ENCODE measurements at regions of chr18 and their contacts with region 1.

Region 1: GRCh38 chr18:9516437-9517064 is 41.2 kb downstream of the RALBP1 start:
- DNase-seq: peak in 1 of 2 experiments; percentile 32
- H3K4me3 ChIP-seq: no peak overlapping the region
- H3K4me3 Mint-ChIP-seq: no peak overlapping the region
- H3K27ac Mint-ChIP-seq: no peak overlapping the region
- H3K4me1 ChIP-seq: peaks cover 31% of the 10 kb centered on the region
- H3K4me1 Mint-ChIP-seq: peaks cover 15% of the 10 kb centered on the region
- H3K27me3 ChIP-seq: no peaks in the 10 kb centered on the region
- H3K27me3 Mint-ChIP-seq: no peaks in the 10 kb centered on the region
- CTCF ChIP-seq: peak; percentile 82 to 85

Region 2: GRCh38 chr18:9136315-9137155 is 380.0 kb before region 1 on chr18 and contains the start of gene ANKRD12:
- CTCF ChIA-PET with region 1: no interaction called
- POLR2A ChIA-PET with region 1: no interaction called
- intact Hi-C with region 1: loop called (anchors 10 kb)
- DNase-seq: peak; percentile 97 to 98
- H3K4me3 ChIP-seq: peak within 1 kb of the TSS; percentile 96
- H3K4me3 Mint-ChIP-seq: peak within 1 kb of the TSS; percentile 94
- H3K27ac Mint-ChIP-seq: peak within 1 kb of the TSS; percentile 96
- H3K4me1 ChIP-seq: peaks cover 22% of the 10 kb centered on the region
- H3K4me1 Mint-ChIP-seq: peaks cover 22% of the 10 kb centered on the region
- H3K27me3 ChIP-seq: no peaks in the 10 kb centered on the region
- H3K27me3 Mint-ChIP-seq: no peaks in the 10 kb centered on the region
- CTCF ChIP-seq: no peak
- total RNA-seq, gene ANKRD12: 33.2 and 36.5 TPM in 2 replicates

Region 3: DNA sequence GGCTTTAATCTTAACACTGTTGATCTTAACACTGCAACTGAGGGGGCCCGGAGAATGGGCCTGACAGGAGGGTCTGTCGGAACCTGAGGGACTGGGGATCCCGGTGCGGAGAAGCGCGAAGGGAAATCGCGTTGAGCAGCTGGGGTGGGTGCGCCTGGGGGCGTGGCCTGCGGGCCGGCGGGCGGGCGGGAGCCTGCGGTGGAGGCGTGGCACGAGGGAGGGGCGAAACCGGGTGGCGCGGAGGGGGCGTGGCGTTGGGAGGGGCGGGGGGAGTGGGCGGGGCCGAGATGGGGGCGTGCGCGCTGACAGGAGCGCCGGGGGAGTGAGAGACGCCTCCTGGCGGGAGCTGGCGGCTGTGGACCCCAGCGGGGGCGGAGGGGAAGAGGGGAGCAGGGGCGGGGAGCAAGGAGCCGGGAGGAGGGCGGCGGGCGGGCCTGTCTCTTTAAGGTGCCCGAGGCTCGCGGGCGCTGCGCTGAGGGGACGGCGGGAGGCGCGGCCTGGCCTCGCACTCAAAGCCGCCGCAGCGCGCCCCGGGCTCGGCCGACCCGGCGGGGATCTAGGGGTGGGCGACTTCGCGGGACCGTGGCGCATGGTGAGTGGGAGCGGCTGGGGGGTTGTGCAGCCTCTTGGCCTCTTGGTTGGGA is 182.1 kb before region 1 on chr18 and contains the start of gene TWSG1:
- CTCF ChIA-PET with region 1: interaction called, 4 read pairs
- POLR2A ChIA-PET with region 1: interaction called, 8 read pairs
- intact Hi-C with region 1: loop called (anchors 1 kb)
- DNase-seq: peak; percentile 95 to 96
- H3K4me3 ChIP-seq: peak within 1 kb of the TSS; percentile 80
- H3K4me3 Mint-ChIP-seq: peak within 1 kb of the TSS; percentile 97
- H3K27ac Mint-ChIP-seq: peak within 1 kb of the TSS; percentile 97
- H3K4me1 ChIP-seq: 0 out of 2 replicates have a peak, but pooled peaks cover 4% of the 10 kb centered on the region
- H3K4me1 Mint-ChIP-seq: no peaks in the 10 kb centered on the region
- H3K27me3 ChIP-seq: no peaks in the 10 kb centered on the region
- H3K27me3 Mint-ChIP-seq: no peaks in the 10 kb centered on the region
- CTCF ChIP-seq: peak; percentile 38 to 84
- total RNA-seq, gene TWSG1: 43.7 and 43.9 TPM in 2 replicates

Region 4: DNA sequence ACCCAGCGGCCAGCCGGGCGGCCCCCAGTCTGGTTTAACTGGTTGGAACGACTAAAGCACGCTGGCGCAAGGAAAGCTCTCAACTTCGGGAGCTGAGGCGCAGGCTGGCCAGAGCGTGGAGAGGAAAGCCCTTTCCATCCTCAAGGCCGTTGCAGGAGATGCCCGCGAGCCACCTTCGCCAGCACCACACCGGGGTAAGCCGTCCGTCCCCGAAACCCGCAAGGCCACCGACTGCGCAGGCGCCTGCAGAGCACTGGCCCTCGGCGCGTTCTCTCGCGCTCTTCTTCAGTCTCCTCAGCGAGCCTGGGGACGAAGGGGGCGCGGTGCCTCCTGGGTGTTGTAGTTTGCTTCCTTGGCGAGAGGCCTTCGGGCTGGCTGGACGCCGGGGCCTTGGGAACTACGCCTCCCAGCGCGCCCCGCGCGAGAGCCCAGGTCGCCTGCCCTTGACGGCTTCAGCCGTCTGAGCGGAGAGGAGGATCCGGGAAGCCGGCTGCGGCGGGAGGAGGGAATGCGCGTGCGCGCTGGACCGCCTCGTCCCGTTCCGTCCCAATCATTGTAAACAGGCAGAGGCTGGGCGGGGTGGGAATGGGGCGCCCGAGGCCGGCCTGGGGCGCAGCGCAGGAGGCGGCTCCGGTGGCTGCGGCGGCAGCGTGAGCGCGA is 41.4 kb before region 1 on chr18 and contains the start of gene RALBP1:
- CTCF ChIA-PET with region 1: interaction called, 4 read pairs
- POLR2A ChIA-PET with region 1: interaction called, 3 read pairs
- intact Hi-C with region 1: loop called (anchors 1 kb)
- DNase-seq: peak; percentile 99 to 100
- H3K4me3 ChIP-seq: peak within 1 kb of the TSS; percentile 84
- H3K4me3 Mint-ChIP-seq: peak within 1 kb of the TSS; percentile 75
- H3K27ac Mint-ChIP-seq: peak within 1 kb of the TSS; percentile 86
- H3K4me1 ChIP-seq: peaks cover 25% of the 10 kb centered on the region
- H3K4me1 Mint-ChIP-seq: peaks cover 40% of the 10 kb centered on the region
- H3K27me3 ChIP-seq: no peaks in the 10 kb centered on the region
- H3K27me3 Mint-ChIP-seq: no peaks in the 10 kb centered on the region
- CTCF ChIP-seq: no peak
- total RNA-seq, gene RALBP1: 64.9 and 66.3 TPM in 2 replicates

Region 5: GRCh38 chr18:9535382-9535991 is 18.9 kb after region 1 on chr18:
- CTCF ChIA-PET with region 1: interaction called, 3 read pairs
- POLR2A ChIA-PET with region 1: no interaction called
- intact Hi-C with region 1: loop called (anchors 2 kb)
- DNase-seq: peak; percentile 66 to 71
- H3K4me3 ChIP-seq: no peak overlapping the region
- H3K4me3 Mint-ChIP-seq: peak overlapping the region; percentile 22
- H3K27ac Mint-ChIP-seq: peak overlapping the region; percentile 7
- H3K4me1 ChIP-seq: peaks cover 10% of the 10 kb centered on the region
- H3K4me1 Mint-ChIP-seq: peaks cover 7% of the 10 kb centered on the region
- H3K27me3 ChIP-seq: no peaks in the 10 kb centered on the region
- H3K27me3 Mint-ChIP-seq: no peaks in the 10 kb centered on the region
- CTCF ChIP-seq: no peak

Region 6: GRCh38 chr18:9549405-9549804 is 32.9 kb after region 1 on chr18:
- CTCF ChIA-PET with region 1: no interaction called
- POLR2A ChIA-PET with region 1: no interaction called
- intact Hi-C with region 1: no loop called
- DNase-seq: peak in 1 of 2 experiments; percentile 46
- H3K4me3 ChIP-seq: no peak overlapping the region
- H3K4me3 Mint-ChIP-seq: no peak overlapping the region
- H3K27ac Mint-ChIP-seq: no peak overlapping the region
- H3K4me1 ChIP-seq: no peaks in the 10 kb centered on the region
- H3K4me1 Mint-ChIP-seq: no peaks in the 10 kb centered on the region
- H3K27me3 ChIP-seq: no peaks in the 10 kb centered on the region
- H3K27me3 Mint-ChIP-seq: no peaks in the 10 kb centered on the region
- CTCF ChIP-seq: peak in 1 of 2 experiments; percentile 50